ENCODE measurements at regions of chr19 and their contacts with region 1.

Region 1: GRCh38 chr19:38929929-38930775 is at the start of gene SARS2:
- DNase-seq: peak; percentile 93
- H3K4me3 Mint-ChIP-seq: peak within 1 kb of the TSS; percentile 98
- H3K27ac Mint-ChIP-seq: peak within 1 kb of the TSS; percentile 99
- H3K4me1 Mint-ChIP-seq: peaks cover 50% of the 10 kb centered on the region
- H3K27me3 Mint-ChIP-seq: no peaks in the 10 kb centered on the region

Region 2: GRCh38 chr19:38634757-38635482 is 295.2 kb before region 1 on chr19:
- CTCF ChIA-PET with region 1: interaction called, 14 read pairs
- DNase-seq: peak; percentile 83
- H3K4me3 Mint-ChIP-seq: no peak overlapping the region
- H3K27ac Mint-ChIP-seq: peak overlapping the region; percentile 74
- H3K4me1 Mint-ChIP-seq: peaks cover 45% of the 10 kb centered on the region
- H3K27me3 Mint-ChIP-seq: no peaks in the 10 kb centered on the region

Region 3: DNA sequence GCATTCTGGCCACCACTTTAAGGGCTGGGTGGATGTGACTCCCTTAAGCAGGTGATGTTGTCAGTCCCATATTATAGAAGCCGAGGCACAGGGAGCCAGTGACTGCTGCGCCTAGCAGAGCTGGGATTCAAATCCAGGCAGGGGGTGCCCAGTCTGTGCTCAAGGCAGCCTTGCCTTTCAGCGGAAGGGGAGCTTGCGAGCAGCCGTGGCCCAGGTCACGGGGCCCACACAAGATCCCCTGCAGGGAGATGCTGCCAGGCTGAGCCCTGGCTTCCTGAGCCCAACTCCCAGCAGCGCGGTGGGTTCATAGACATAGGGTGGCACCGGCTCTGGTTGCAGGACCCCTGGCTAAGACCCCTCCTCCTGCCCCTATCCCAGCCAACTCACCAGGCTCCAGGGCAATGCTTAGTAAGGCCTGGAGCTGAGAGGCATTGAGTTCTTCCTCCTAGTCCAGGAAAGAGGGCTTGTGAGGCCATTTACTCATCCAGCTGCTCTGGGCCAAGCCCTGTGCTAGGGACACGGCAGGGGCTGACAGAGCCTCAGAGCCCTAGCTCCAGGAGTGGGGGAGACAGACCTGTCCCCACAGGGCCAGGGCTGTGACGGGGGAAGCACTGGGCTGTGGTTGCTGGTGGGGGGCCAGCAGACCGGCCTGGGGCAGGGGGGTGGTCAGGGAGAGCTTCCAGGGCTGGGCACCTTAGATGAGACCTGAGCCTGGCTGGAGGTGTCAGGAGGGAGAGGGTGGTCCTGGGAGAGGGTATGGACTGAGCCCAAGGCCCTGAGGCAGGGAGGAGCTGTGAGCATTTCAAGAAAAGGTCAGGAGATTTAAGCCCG is 195.5 kb before region 1 on chr19:
- CTCF ChIA-PET with region 1: interaction called, 18 read pairs
- DNase-seq: peak; percentile 67
- H3K4me3 Mint-ChIP-seq: peak overlapping the region; percentile 74
- H3K27ac Mint-ChIP-seq: peak overlapping the region; percentile 91
- H3K4me1 Mint-ChIP-seq: peaks cover 63% of the 10 kb centered on the region
- H3K27me3 Mint-ChIP-seq: peaks cover 44% of the 10 kb centered on the region

Region 4: DNA sequence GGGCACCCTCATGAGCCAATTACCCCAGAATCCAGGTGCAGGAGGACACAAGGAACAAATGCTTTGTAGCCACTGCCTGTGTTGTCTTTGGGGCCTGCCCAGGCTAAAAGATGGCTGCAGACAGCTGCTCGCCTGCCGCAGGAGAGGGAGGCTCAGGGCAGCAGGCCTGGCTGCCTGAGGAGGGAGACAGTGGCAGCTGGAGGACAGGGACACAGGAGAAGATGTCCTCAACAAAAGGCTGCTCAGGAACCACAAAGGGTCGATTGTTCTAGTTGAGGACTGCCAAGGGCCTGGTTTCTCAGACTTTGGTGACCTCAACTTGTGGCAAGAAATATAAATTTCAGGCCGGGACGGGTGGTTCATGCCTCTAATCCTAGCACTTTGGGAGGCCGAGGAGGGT is 38.4 kb before region 1 on chr19:
- CTCF ChIA-PET with region 1: interaction called, 10 read pairs
- DNase-seq: no peak
- H3K4me3 Mint-ChIP-seq: no peak overlapping the region
- H3K27ac Mint-ChIP-seq: no peak overlapping the region
- H3K4me1 Mint-ChIP-seq: no peaks in the 10 kb centered on the region
- H3K27me3 Mint-ChIP-seq: no peaks in the 10 kb centered on the region

Region 5: GRCh38 chr19:38899447-38900219 is 30.5 kb before region 1 on chr19 and contains the starts of genes NFKBIB and SIRT2:
- CTCF ChIA-PET with region 1: interaction called, 14 read pairs
- DNase-seq: peak; percentile 100
- H3K4me3 Mint-ChIP-seq: peak within 1 kb of the TSS; percentile 84
- H3K27ac Mint-ChIP-seq: peak within 1 kb of the TSS; percentile 95
- H3K4me1 Mint-ChIP-seq: peaks cover 44% of the 10 kb centered on the region
- H3K27me3 Mint-ChIP-seq: no peaks in the 10 kb centered on the region